ENCODE measurements at regions of chr4 and their contacts with region 1.

Region 1: DNA sequence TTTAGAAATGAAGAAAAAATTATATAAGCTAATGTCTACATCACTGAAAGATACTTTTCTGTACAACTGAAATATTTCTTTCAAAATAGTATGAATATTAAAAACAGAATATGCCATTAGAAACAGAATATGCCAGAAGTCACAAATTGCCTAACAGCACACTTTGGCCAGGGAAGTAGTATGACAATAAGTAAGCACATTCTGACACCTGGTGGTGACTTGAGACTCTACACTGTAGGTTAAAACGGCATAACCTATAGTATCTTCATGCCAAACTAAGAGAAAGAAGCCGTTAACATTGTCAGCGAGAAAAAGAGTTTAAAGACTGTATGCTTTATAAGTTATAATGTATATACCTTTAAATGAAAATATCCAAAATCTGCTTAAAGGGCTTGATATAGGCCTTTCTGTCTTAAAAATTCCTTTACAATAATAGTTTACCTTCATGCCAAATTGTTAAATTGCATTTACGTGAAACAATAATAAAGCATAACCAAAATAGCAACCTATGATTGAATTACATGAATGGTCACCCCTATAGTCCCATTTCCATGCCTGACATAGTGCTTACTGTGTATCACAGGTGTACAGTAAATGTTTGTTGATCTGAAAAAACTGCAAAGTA is 32.8 kb downstream of the FAM13A start:
- DNase-seq: no peak
- ATAC-seq: peak; percentile 98

Region 2: DNA sequence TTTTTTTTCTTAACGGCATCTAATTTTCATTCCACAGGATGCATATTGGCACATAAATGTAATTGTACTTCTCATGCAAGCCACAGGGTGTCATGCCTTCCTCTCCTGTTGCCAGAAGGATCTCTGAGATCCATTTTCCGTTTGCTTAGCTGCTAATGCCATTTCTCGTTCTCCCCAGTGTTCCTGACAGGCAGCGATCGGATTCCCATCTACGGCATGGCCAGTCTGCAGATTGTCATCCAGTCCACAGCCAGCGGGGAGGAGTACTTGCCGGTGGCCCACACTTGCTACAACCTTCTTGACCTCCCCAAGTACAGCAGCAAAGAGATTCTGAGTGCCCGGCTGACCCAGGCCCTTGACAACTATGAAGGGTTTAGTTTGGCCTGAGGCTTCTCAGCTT is 317.6 kb before region 1 on chr4:
- intact Hi-C with region 1: loop called (anchors 5 kb)
- DNase-seq: no peak
- ATAC-seq: peak; percentile 90

Region 3: DNA sequence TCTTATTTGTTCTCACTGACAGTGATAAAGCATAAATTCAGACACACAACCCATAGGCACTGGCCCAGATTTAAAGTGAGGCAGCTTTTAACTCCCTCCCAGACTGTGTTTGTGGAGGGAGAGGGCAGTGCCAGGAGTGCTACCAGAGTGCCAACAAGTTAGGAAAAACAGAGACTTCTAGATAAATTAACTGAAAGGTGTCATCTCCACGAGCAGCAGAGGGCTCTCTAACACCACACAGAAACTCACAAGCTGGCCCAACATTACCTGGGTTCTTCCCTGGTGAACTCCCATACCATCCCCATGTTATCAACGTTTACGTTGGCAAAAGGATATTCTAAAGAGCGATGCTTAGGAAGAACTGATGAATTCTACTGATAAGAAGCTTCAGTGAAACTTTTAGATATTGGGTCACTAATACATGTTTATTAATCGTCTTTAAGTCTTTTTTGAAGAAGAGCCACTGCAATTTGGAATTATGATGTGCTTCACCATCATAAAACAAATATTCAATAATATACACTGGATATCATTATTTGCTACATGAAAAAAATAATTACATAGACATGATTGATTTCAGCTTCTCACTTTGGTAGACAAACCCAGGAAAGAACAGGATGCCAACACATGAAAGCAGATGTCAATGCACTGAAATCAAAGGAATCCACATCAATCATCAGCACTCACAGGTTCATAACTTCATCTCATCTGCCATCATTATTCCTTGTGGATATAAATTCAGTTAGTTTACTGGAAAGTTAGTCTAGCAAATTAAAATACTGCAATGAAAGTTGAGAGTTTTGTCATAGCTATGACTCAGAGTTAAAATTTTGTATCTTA is 205.3 kb before region 1 on chr4:
- intact Hi-C with region 1: loop called (anchors 2 kb)
- DNase-seq: no peak
- ATAC-seq: peak; percentile 13